Activated CD4-positive, alpha-beta T cell treated with anti-CD3 and anti-CD28 coated beads for 36 hours (primary cell): ENCODE measurements at regions of chr18 and their contacts with region 1.

Region 1: GRCh38 chr18:24362758-24363157 is 34.9 kb downstream of the OSBPL1A start:
- DNase-seq: no peak
- ATAC-seq: no peak
- H3K4me3 Mint-ChIP-seq: no peak overlapping the region
- H3K27ac Mint-ChIP-seq: no peak overlapping the region
- H3K4me1 Mint-ChIP-seq: peaks cover 3% of the 10 kb centered on the region
- H3K27me3 Mint-ChIP-seq: no peaks in the 10 kb centered on the region

Region 2: GRCh38 chr18:23934252-23934651 is 428.5 kb before region 1 on chr18:
- CTCF ChIA-PET with region 1: no interaction called
- POLR2A ChIA-PET with region 1: no interaction called
- intact Hi-C with region 1: no loop called
- DNase-seq: no peak
- ATAC-seq: peak; percentile 23
- H3K4me3 Mint-ChIP-seq: no peak overlapping the region
- H3K27ac Mint-ChIP-seq: no peak overlapping the region
- H3K4me1 Mint-ChIP-seq: peaks cover 45% of the 10 kb centered on the region
- H3K27me3 Mint-ChIP-seq: no peaks in the 10 kb centered on the region

Region 3: DNA sequence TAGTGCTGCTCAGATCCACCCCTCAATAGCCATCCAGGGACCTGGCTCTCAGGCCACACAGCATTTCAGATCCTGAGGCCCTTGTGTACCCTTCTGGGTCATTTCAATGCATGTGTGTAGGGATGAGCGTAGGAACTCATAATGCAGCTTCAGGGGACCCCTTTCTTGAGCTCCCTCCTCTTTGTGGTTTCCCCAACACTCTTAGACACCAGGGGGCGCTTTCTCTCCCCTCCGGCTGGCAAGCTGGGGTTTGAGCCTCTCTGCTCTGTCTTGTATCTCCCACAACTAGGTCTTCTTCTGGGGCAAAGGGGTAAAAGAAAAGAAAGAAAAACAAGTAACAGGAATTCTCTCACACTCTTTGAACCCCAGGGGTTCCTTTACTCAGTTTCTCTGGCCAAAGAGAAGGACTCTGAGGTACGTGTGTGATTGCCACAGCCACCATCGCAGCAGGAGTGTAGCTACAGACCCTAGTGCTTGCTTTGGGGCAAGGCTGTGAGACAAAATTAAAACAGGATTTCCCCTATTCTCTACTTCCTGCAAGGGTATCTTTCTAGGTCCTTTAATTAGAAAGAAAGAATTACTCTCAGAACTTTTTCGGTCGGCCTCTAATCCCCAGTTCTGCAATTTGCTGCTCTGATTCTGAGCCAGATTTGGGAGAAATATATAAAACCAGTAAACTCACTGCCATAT is 185.9 kb before region 1 on chr18:
- CTCF ChIA-PET with region 1: interaction called, 6 read pairs
- POLR2A ChIA-PET with region 1: no interaction called
- intact Hi-C with region 1: loop called in 1 of 2 experiments (anchors 5 kb)
- DNase-seq: peak; percentile 75
- ATAC-seq: no peak
- H3K4me3 Mint-ChIP-seq: no peak overlapping the region
- H3K27ac Mint-ChIP-seq: no peak overlapping the region
- H3K4me1 Mint-ChIP-seq: peaks cover 6% of the 10 kb centered on the region
- H3K27me3 Mint-ChIP-seq: no peaks in the 10 kb centered on the region

Region 4: DNA sequence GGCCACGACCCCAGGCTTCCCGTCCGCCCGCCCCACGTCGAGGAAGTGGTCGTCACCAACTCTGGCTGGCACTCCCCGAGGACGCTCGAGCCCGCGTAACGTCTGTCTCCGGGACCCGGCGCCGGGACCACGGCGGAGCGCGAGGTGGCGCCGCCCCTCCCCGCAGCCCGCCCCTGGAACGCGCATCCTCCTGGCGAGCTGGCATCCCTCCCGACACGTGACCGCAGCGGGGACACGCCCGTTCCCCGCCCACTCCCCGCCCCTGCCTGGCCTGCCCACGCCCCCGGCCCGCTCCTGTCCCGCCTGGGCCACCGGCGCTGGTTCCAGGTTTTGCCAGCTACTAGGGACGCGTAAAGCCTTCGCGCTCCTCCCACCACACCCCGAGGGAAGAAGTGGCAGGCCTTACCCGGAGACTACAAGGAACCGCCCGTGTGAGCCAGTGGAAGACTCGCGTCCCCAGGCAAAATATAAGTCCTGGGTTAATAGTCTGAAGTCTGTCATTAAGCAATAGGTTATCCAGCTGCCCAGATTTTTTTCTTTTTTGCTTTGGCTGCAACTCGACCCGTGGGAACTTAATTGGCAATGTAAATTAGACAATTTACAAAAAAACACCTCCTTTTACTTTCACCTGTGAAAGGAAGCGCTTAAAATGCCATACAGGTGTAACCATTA is 35.1 kb after region 1 on chr18 and contains the start of gene OSBPL1A:
- CTCF ChIA-PET with region 1: interaction called, 4 read pairs
- POLR2A ChIA-PET with region 1: no interaction called
- intact Hi-C with region 1: loop called in 1 of 2 experiments (anchors 2 kb)
- DNase-seq: peak; percentile 88
- ATAC-seq: peak; percentile 86
- H3K4me3 Mint-ChIP-seq: peak within 1 kb of the TSS; percentile 76
- H3K27ac Mint-ChIP-seq: peak within 1 kb of the TSS; percentile 59
- H3K4me1 Mint-ChIP-seq: peaks cover 28% of the 10 kb centered on the region
- H3K27me3 Mint-ChIP-seq: peaks cover 16% of the 10 kb centered on the region
- total RNA-seq, gene OSBPL1A: 2.9 to 3.4 TPM

Region 5: GRCh38 chr18:24426398-24427294 is 63.9 kb after region 1 on chr18 and contains the start of gene IMPACT:
- CTCF ChIA-PET with region 1: interaction called, 10 read pairs
- POLR2A ChIA-PET with region 1: no interaction called
- intact Hi-C with region 1: loop called in 1 of 2 experiments (anchors 2 kb)
- DNase-seq: peak; percentile 86
- ATAC-seq: peak; percentile 94
- H3K4me3 Mint-ChIP-seq: peak within 1 kb of the TSS; percentile 85
- H3K27ac Mint-ChIP-seq: peak within 1 kb of the TSS; percentile 90
- H3K4me1 Mint-ChIP-seq: peaks cover 29% of the 10 kb centered on the region
- H3K27me3 Mint-ChIP-seq: peaks cover 19% of the 10 kb centered on the region
- total RNA-seq, gene IMPACT: 15.4 to 18.3 TPM

Region 6: DNA sequence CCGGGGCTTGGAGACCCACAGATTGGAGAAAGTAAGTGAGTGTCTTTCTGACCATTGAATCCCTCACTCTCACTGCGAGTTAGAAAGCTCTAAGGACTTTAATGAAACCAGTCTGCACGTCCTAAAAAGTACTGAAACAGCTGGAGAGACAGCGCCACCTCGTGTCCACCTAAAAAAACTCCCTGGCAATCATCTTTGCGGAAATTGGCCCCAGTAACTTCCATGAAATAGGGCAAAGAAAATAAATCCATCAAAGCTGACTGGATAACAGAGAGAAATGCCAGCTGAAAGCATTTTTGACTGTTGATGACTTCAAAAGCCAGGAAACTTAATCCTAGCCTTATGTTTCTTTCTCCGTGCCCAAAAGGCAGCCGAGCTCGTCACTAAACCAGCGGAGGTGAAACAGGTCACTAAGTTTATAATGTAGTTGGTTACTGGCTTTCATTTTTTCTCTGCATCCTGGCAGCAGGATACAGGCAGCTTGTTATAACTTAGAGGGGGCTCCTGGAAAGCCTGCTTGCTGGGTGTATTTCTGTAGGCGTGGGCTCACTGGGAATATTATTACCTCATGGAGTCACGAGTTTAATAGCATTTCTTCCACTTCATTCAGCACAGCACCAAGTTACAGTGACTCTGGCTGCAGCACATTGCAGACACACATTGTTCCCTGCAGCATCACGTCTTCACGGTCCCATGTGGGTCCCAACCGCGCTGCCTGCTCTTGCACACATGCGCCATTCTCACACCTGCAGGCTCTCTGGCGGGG is 364.2 kb after region 1 on chr18:
- CTCF ChIA-PET with region 1: interaction called, 8 read pairs
- POLR2A ChIA-PET with region 1: no interaction called
- intact Hi-C with region 1: loop called (anchors 1 kb)
- DNase-seq: peak; percentile 79
- ATAC-seq: no peak
- H3K4me3 Mint-ChIP-seq: no peak overlapping the region
- H3K27ac Mint-ChIP-seq: no peak overlapping the region
- H3K4me1 Mint-ChIP-seq: no peaks in the 10 kb centered on the region
- H3K27me3 Mint-ChIP-seq: peaks cover 5% of the 10 kb centered on the region

Region 7: DNA sequence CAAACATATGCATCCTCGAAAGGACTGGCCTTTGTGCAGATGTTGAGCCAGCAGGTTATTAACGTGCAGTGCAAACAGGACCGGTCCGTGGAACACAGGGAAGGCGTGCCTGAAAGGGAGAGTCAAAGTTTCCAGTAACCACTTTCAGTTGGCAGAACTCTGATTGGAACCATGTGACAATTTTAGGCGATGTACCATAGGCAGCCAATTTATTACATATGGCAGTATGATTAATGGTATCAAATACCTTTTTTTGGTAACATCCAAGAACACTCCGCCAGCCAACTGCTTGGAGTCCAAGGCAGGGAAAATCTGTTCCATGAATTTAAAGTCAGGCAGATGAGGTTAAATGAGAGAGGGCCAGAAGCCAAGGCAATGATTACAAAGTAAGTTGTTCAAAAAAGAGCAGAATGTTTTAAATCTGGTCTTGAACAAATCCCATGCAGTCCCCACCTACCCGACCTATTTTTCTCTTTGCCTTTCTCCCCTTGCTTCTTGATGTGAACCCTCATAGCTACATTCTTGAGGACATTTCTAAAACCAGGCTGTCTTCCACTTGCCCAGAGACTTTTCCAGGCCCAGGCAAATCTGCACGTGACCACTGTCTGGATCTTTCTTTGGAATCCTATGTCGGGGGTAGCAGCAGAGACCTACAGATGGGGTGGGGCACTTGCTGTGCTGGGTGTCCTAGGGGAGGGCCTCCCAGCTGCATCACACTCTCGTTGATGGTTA is 449.4 kb after region 1 on chr18:
- CTCF ChIA-PET with region 1: no interaction called
- POLR2A ChIA-PET with region 1: no interaction called
- intact Hi-C with region 1: no loop called
- DNase-seq: no peak
- ATAC-seq: no peak
- H3K4me3 Mint-ChIP-seq: no peak overlapping the region
- H3K27ac Mint-ChIP-seq: no peak overlapping the region
- H3K4me1 Mint-ChIP-seq: no peaks in the 10 kb centered on the region
- H3K27me3 Mint-ChIP-seq: no peaks in the 10 kb centered on the region